Body of pancreas (tissue), 4 donors: ENCODE measurements at regions of chr16 and their contacts with region 1.

Region 1: DNA sequence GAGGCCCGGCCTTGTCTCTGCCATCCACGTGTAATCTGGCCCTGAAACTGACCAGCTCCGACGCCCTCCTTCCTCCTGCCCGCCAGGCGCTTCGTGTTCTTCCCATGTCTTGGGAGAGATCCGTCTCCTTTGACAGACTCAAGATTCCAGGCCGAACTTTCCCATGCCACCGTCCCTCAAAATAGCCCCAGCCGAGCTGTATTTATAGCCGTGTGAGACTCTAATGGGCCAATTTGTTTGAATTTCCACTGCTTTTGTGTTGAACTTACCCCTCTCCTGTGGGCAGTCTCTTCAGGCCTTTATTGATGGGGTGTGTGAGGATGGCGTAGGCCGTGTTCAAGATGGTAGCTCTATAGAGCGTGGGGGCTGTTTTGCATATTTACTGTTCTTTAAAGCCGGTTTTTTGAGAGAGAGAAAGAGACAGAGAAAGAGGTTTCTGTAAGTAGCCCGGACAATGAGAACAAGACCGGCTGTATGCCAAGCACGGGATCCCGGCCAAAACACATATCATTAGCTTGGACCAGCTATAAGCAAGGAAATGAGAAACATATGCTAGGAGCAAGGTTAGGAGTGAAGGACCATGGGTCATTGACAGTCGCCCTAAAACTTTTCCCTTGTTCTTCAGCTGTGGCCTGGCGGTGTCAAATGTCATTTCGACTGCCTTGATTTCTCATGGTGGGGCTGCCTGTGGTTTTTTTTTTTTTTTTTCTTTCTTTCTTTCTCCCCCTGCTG is 124.5 kb upstream of the ZFHX3 start:
- DNase-seq: peak; percentile 84 to 96 (median 88)
- ATAC-seq: peak; percentile 85
- H3K4me3 ChIP-seq: no peak overlapping the region
- H3K27ac ChIP-seq: peak overlapping the region; percentile 2 to 40 (median 6)
- H3K4me1 ChIP-seq: peaks cover 23% of the 10 kb centered on the region
- H3K27me3 ChIP-seq: no peaks in the 10 kb centered on the region
- CTCF ChIP-seq: peak in 5 of 7 experiments; percentile 11 to 88 (median 24)
- POLR2A ChIP-seq: no peak

Region 2: GRCh38 chr16:72832621-72833248 is 339.7 kb before region 1 on chr16:
- intact Hi-C with region 1: loop called (anchors 10 kb)
- DNase-seq: peak; percentile 74 to 84 (median 78)
- ATAC-seq: peak; percentile 79
- H3K4me3 ChIP-seq: no peak overlapping the region
- H3K27ac ChIP-seq: no peak overlapping the region
- H3K4me1 ChIP-seq: peaks cover 16% of the 10 kb centered on the region
- H3K27me3 ChIP-seq: no peaks in the 10 kb centered on the region
- CTCF ChIP-seq: peak; percentile 90 to 97 (median 95)
- POLR2A ChIP-seq: no peak